Right ventricle myocardium inferior (tissue), 1 donor: ENCODE measurements at regions of chr20 and their contacts with region 1.

Region 1: GRCh38 chr20:25042531-25043498 is 15.1 kb downstream of the ACSS1 start:
- DNase-seq: peak; percentile 85
- ATAC-seq: peak; percentile 26

Region 2: DNA sequence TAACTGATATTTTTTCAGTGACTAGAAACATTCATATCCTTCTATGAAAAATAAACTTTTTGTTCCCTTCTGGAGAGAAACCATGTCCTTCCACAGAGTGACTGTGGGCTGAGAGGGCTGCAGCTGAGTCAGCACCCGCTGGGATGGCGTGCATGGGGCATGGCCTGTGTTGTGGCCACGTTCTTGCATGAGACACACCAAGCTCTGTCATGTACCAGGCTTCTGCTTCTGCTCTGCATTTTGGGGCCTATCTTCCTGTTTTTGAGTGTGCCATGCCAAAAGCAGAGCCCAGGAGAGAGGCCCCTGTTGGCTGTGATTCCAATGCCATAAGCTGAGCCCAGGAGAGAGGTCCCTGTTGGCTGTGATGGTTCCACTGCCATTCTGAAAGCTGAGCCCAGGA is 61.0 kb before region 1 on chr20:
- intact Hi-C with region 1: no loop called
- DNase-seq: peak; percentile 84
- ATAC-seq: peak; percentile 62

Region 3: DNA sequence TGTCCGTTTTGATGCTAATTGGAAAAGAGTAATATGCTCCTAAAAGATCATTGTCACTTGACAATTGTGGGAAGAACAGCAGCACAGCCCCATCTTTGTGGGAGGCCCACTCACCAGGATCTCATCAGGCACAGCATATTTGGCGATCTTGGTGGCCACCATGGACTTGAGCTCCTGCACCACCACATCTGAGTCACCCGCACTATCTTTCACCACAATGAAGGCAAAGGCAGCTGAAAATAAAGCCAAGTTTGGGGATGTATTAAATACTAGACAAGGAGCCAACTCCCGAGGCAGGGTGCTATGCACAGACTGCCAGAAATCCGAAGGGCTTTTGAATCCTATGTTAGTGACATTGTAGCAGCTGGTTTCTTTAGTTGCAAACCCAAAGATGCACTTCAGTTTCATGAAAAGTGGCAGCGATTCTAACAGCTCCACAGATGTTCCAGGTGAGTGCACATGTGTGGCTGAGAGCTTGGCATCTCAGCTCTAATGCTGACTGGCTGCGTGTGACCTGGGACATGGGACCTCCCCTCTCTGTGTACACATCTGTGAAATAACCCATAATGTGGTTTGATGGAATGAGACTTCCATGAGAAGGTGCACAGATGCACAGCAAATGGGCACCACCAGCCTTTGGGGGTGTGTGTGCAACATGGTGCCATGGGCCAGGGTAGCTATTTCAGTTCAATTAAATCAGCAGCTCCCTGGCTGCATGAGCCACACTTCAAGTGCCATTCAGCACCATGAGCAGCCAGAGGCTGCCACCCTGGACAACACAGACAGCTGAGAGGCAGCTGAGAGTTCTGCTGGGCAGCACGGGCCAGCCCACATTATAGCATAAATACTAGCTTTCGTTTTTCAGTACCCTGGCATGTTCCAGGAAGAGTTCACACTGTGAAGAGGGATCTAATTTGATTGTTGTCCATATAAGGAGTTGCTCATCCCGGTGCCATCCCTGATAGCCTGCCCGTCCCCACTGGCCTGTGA is 33.4 kb before region 1 on chr20:
- intact Hi-C with region 1: no loop called
- DNase-seq: no peak
- ATAC-seq: peak; percentile 61

Region 4: GRCh38 chr20:25032478-25033280 is 10.1 kb before region 1 on chr20:
- intact Hi-C with region 1: loop called (anchors 1 kb)
- DNase-seq: peak; percentile 81
- ATAC-seq: peak; percentile 85

Region 5: GRCh38 chr20:25057234-25058050 is 14.6 kb after region 1 on chr20:
- intact Hi-C with region 1: loop called (anchors 2 kb)
- DNase-seq: peak; percentile 90
- ATAC-seq: peak; percentile 73